Posterior cingulate gyrus (tissue), 11 donors: ENCODE measurements at regions of chr2 and their contacts with region 1.

Region 1: GRCh38 chr2:64311948-64312621 is 141.9 kb upstream of the LGALSL start:
- DNase-seq: peak; percentile 46 to 96 (median 77)

Region 2: DNA sequence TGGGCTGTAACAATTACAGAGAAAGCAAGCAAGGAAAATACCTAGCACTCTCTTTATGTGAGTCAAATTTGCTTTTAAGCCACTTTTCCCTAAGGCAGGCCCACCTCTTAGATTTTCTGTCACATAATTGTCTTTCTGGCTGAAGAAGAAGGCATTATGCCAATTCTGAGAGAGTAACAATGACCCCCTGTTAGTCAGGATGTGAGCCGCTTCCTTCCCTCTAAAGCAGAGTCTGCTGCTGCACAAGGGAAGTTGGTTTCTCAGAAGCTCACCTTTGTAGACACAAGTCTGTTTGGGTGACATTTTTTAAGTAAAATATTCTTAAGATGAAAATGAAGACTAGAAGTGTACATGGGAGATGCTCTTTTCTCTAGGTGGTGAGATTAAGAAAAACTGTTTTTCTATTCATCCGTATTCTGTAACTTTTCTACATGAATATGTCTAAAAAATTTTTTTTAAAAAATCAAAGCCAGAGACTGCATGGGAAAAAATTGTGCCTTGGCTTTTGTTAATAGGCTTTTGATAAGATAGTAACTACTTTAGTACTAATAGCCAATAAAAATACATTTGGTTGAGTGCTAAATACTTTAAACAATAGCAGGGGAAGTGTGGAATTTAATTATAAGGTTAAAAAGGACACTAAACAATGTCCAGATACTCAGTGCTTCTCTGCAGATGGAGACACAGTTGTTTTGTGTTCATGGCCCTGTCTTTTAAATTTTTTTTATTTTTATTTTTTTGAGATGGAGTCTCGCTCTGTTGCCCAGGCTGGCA is 259.4 kb before region 1 on chr2:
- intact Hi-C with region 1: loop called (anchors 1 kb)
- DNase-seq: no peak

Region 3: DNA sequence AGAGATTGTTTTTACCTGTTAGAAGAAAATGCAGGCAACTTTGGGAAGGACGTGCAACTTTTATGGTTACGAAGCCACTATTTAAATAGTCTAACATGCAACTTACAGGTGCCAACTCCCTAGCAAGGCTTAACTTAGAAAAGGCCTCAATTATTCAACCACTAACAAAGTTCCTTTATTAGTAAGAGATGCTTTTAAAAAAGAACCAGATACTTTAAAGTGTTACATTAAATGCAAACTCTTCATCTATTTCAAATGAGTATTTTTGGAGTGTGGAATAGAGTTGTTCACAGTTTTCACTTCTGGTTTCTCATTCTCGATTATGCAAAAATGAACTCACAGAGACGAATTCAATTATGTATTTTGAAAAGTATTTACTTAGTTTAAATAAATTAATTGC is 219.6 kb before region 1 on chr2:
- intact Hi-C with region 1: no loop called
- DNase-seq: no peak

Region 4: GRCh38 chr2:64228126-64228678 is 83.9 kb before region 1 on chr2:
- intact Hi-C with region 1: loop called (anchors 5 kb)
- DNase-seq: peak; percentile 82 to 99 (median 89)